PC-3 (cell line): ENCODE measurements at regions of chr2 and their contacts with region 1.

Region 1: DNA sequence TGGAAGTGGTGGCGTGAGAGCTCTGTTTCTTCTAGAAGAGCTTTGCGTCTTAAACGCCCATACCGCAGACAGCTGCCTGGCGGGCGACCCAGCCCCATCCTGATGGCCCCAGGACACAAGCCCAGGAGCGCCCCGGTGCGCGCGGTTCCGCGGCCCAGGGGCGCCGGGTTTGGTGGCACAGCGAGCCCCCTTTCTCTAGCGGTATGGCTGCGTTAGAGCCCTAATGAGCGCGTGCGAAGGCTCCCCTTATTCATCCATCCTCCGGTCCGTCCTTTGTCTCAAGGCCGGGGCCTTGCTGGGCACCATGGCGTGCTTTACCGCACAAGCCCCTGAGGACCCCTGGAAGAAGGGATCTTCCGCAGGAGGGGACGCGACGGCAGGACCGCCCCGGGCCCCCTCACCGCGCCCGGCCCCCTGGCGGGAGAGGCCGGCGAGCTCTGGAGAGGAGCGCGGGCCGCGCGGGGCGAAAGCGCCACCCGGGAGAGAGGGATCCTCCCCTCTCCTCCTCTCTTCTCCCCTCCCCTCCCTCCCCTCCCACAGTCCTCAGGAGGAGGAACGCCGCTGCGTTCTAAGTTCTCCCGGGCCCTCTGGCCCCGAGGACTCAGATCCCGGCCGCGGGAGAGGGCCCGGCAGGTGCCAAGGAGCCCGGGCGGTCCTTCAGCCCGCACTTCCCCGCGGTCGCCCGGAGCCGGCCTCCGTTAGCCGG is 626 bp upstream of the SLC1A4 start:
- DNase-seq: no peak
- ATAC-seq: peak; percentile 71
- H3K4me3 ChIP-seq: peak overlapping the region; percentile 97
- H3K27ac ChIP-seq: peak overlapping the region; percentile 57
- H3K4me1 ChIP-seq: peaks cover 17% of the 10 kb centered on the region
- H3K27me3 ChIP-seq: no peaks in the 10 kb centered on the region
- CTCF ChIP-seq: peak; percentile 47

Region 2: GRCh38 chr2:64914735-64915509 is 73.7 kb before region 1 on chr2:
- CTCF ChIA-PET with region 1: interaction called, 7 read pairs
- POLR2A ChIA-PET with region 1: interaction called, 8 read pairs
- intact Hi-C with region 1: loop called (anchors 2 kb)
- DNase-seq: no peak
- ATAC-seq: no peak
- H3K4me3 ChIP-seq: no peak overlapping the region
- H3K27ac ChIP-seq: no peak overlapping the region
- H3K4me1 ChIP-seq: no peaks in the 10 kb centered on the region; the same call in 1 of the 2 replicates
- H3K27me3 ChIP-seq: no peaks in the 10 kb centered on the region
- CTCF ChIP-seq: no peak

Region 3: DNA sequence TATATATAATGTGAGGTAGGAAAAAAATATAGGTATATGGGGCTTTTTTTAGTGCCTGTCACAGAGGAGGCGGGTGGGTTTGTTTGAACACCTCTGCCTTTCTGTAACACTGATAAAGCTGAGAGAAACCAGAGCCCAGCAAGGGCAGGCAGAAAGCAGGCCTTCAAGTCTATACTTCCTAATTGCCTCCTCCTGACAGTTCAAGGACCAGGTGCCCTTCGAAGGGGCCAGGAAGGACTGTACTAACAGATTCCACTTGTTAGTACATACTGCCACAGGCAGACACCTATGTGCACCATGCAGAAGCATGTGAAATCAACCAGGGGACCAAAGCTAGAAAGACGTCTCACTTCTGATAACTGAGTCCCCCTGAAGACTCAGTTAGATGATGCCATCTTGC is 14.5 kb after region 1 on chr2:
- CTCF ChIA-PET with region 1: no interaction called
- POLR2A ChIA-PET with region 1: interaction called, 6 read pairs
- intact Hi-C with region 1: loop called (anchors 1 kb)
- DNase-seq: no peak
- ATAC-seq: no peak
- H3K4me3 ChIP-seq: no peak overlapping the region
- H3K27ac ChIP-seq: no peak overlapping the region
- H3K4me1 ChIP-seq: peaks cover 14% of the 10 kb centered on the region
- H3K27me3 ChIP-seq: no peaks in the 10 kb centered on the region
- CTCF ChIP-seq: no peak

Region 4: DNA sequence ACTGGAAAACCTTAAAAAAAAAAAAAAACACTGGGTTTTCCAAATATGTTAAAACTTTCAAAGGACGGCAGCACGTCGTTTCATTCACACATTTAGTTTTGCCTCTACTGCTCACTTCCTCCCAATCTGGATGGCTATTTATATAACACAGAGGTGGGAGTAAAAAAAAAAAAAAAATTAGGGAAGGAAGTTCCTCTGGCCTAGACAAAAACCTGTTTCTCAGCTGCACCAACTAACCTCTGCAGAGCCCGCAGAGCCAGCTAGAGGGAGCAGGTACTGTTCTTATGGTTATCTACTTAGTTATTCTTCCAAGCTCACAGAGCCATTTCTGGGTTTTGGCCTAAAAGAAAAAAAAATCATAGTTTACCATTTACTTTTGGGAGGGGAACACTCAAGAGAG is 28.8 kb after region 1 on chr2:
- CTCF ChIA-PET with region 1: no interaction called
- POLR2A ChIA-PET with region 1: interaction called, 16 read pairs
- intact Hi-C with region 1: no loop called
- DNase-seq: peak; percentile 28
- ATAC-seq: peak; percentile 45; the same call in 1 of the 2 replicates
- H3K4me3 ChIP-seq: no peak overlapping the region
- H3K27ac ChIP-seq: no peak overlapping the region
- H3K4me1 ChIP-seq: no peaks in the 10 kb centered on the region
- H3K27me3 ChIP-seq: no peaks in the 10 kb centered on the region
- CTCF ChIP-seq: peak; percentile 43; the same call in 1 of the 2 replicates